T-cell (primary cell): ENCODE measurements at regions of chr1 and their contacts with region 1.

Region 1: GRCh38 chr1:204446370-204447111 is 34.9 kb upstream of the PPP1R15B start:
- DNase-seq: peak; percentile 60 to 87 (median 75)
- ATAC-seq: peak; percentile 86 to 98 (median 94)
- H3K4me3 ChIP-seq: no peak overlapping the region
- H3K4me3 Mint-ChIP-seq: no peak overlapping the region
- H3K27ac ChIP-seq: no peak overlapping the region
- H3K27ac Mint-ChIP-seq: peak overlapping the region; percentile 74 to 82
- H3K4me1 ChIP-seq: peaks cover 7 to 27% of the 10 kb centered on the region in 2 experiments
- H3K4me1 Mint-ChIP-seq: peaks cover 18 to 37% (median 20%) of the 10 kb centered on the region in 3 donors
- H3K27me3 ChIP-seq: no peaks in the 10 kb centered on the region
- H3K27me3 Mint-ChIP-seq: no peaks in the 10 kb centered on the region

Region 2: DNA sequence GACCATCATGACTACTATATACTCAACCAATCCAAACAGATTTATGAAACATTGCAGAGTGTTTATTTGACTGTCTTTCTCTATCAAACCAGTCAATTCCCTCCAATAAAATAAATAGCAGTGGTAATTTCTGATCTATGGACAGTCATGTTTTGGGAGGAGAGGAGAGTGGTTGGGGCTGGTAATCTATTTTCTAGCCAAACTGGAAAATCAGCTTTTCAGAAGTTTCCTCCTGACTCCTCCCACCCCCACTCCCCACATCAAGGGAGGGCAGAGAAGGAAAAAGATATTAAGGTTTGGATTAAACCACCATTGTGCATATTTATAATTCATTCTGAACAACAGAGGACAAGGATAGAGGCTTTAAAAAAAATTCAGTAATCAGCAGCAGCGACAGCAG is 443.0 kb before region 1 on chr1:
- CTCF ChIA-PET with region 1: no interaction called
- POLR2A ChIA-PET with region 1: no interaction called
- DNase-seq: no peak
- ATAC-seq: no peak
- H3K4me3 ChIP-seq: no peak overlapping the region
- H3K4me3 Mint-ChIP-seq: no peak overlapping the region
- H3K27ac ChIP-seq: no peak overlapping the region
- H3K27ac Mint-ChIP-seq: no peak overlapping the region
- H3K4me1 ChIP-seq: no peaks in the 10 kb centered on the region
- H3K4me1 Mint-ChIP-seq: peaks cover 0 to 4% (median 2%) of the 10 kb centered on the region in 3 donors
- H3K27me3 ChIP-seq: no peaks in the 10 kb centered on the region
- H3K27me3 Mint-ChIP-seq: peaks cover 3 to 6% of the 10 kb centered on the region in 2 donors

Region 3: GRCh38 chr1:204477036-204477740 is 30.6 kb after region 1 on chr1:
- CTCF ChIA-PET with region 1: interaction called, 4 to 11 read pairs
- POLR2A ChIA-PET with region 1: no interaction called
- DNase-seq: no peak
- ATAC-seq: no peak
- H3K4me3 ChIP-seq: no peak overlapping the region
- H3K4me3 Mint-ChIP-seq: no peak overlapping the region
- H3K27ac ChIP-seq: no peak overlapping the region
- H3K27ac Mint-ChIP-seq: no peak overlapping the region
- H3K4me1 ChIP-seq: peaks cover 28 to 57% of the 10 kb centered on the region in 2 experiments
- H3K4me1 Mint-ChIP-seq: peaks cover 74 to 83% (median 81%) of the 10 kb centered on the region in 3 donors
- H3K27me3 ChIP-seq: no peaks in the 10 kb centered on the region
- H3K27me3 Mint-ChIP-seq: no peaks in the 10 kb centered on the region

Region 4: DNA sequence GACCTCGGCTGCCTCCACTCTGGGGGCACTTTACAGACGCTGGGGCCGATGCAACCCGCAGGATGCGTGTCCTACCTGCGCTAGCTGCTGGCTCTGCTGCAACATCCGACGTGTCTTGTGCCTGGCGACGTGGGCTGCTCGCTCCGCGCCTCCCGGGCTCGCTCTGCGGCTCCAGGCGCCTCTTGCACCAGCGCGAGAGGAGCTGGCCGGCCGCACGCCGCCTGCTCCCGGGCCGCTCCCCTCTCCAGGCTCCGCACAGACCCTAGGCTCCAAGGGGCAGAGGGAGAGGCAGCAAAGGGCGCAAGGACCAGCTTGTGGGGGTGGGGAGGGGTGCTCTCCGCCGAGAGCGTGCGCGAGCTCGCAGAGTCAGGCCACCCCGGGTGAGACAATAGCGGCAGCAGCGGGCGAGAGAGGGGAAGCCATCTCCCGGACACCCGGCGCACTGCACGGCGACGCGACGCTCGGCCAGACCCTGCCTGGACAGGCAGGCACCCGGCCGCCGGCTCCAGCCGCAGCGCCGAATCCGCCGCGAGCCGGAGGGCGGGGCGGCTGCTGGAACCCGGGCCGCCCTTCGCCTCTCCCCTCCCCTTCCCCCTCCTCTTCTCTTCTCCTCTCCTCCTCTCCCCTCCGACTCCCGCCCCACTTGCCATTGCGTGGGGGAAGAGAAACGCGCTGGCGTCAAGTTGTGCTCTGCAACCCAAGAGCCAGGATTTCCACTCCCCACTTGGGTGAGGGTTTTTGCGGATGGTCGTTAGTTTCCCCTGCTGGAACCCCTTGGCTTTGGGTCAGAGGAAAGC is 47.9 kb after region 1 on chr1 and contains the start of gene PIK3C2B:
- CTCF ChIA-PET with region 1: interaction called, 8 to 40 read pairs
- POLR2A ChIA-PET with region 1: interaction called in 1 of 2 experiments, 5 read pairs
- DNase-seq: peak; percentile 42 to 79 (median 60)
- ATAC-seq: peak; percentile 71 to 82 (median 78)
- H3K4me3 ChIP-seq: peak within 1 kb of the TSS; percentile 78 to 92
- H3K4me3 Mint-ChIP-seq: peak within 1 kb of the TSS; percentile 89 to 95 (median 91)
- H3K27ac ChIP-seq: peak within 1 kb of the TSS; percentile 74
- H3K27ac Mint-ChIP-seq: peak within 1 kb of the TSS; percentile 96
- H3K4me1 ChIP-seq: peaks cover 31 to 43% of the 10 kb centered on the region in 2 experiments
- H3K4me1 Mint-ChIP-seq: peaks cover 54 to 78% (median 66%) of the 10 kb centered on the region in 3 donors
- H3K27me3 ChIP-seq: no peaks in the 10 kb centered on the region
- H3K27me3 Mint-ChIP-seq: no peaks in the 10 kb centered on the region
- total RNA-seq, gene PIK3C2B: 33.4 to 44.1 (median 36.0) TPM

Region 5: GRCh38 chr1:205568469-205569361 is 1122.2 kb after region 1 on chr1:
- CTCF ChIA-PET with region 1: no interaction called
- POLR2A ChIA-PET with region 1: no interaction called
- DNase-seq: peak in 2 of 35 experiments; percentile 20 to 23
- ATAC-seq: peak; percentile 25 to 68 (median 62)
- H3K4me3 ChIP-seq: peak overlapping the region in 1 of 2 donors; percentile 20
- H3K4me3 Mint-ChIP-seq: peak overlapping the region; percentile 57 to 63 (median 57)
- H3K27ac ChIP-seq: no peak overlapping the region
- H3K27ac Mint-ChIP-seq: no peak overlapping the region
- H3K4me1 ChIP-seq: peaks cover 0 to 9% of the 10 kb centered on the region in 2 experiments
- H3K4me1 Mint-ChIP-seq: peaks cover 0 to 5% (median 4%) of the 10 kb centered on the region in 3 donors
- H3K27me3 ChIP-seq: peaks cover 4 to 60% of the 10 kb centered on the region in 2 experiments
- H3K27me3 Mint-ChIP-seq: peaks cover 50 to 67% of the 10 kb centered on the region in 2 donors